ENCODE measurements at regions of chr15 and their contacts with region 1.

Region 1: DNA sequence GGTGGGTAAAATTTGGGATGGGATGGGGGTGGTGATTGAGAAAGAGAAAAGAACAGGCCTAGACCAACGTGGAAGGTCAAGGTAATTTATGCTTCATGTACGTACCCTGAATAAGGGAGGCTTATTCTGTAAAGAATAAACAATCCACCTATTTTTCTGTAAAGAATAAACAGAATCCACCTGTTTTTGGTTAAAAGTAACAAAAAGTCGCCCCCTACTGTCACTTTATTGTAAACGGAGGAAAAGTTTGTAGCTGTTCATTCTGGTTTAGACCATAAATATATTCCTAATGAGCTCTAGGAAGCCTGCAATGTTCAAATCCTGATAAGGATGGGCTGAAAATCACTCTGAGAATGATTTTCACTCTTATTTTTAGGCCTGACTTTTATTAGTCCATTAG is 23.5 kb upstream of the SQOR start:
- DNase-seq: no peak
- ATAC-seq: peak; percentile 43; the same call in 1 of the 3 replicates
- H3K4me3 ChIP-seq: no peak overlapping the region
- H3K27ac ChIP-seq: no peak overlapping the region
- H3K4me1 ChIP-seq: no peaks in the 10 kb centered on the region; the same call in 1 of the 2 replicates
- H3K27me3 ChIP-seq: no peaks in the 10 kb centered on the region
- CTCF ChIP-seq: peak; percentile 42 to 53 (median 46); a peak in 5 of 6 replicates
- EP300 ChIP-seq: no peak
- POLR2A ChIP-seq: no peak
- RAD21 ChIP-seq: peak; percentile 61

Region 2: GRCh38 chr15:45307230-45307924 is 303.9 kb before region 1 on chr15:
- CTCF ChIA-PET with region 1: no interaction called
- POLR2A ChIA-PET with region 1: no interaction called
- RAD21 ChIA-PET with region 1: no interaction called
- SMC1A ChIA-PET with region 1: no interaction called
- in situ Hi-C with region 1: no loop called
- intact Hi-C with region 1: loop called (anchors 1 kb)
- DNase-seq: peak; percentile 31
- ATAC-seq: peak; percentile 71
- H3K4me3 ChIP-seq: peak overlapping the region; percentile 60; the same call in 1 of the 2 replicates
- H3K27ac ChIP-seq: no peak overlapping the region
- H3K4me1 ChIP-seq: no peaks in the 10 kb centered on the region
- H3K27me3 ChIP-seq: no peaks in the 10 kb centered on the region
- CTCF ChIP-seq: peak; percentile 39 to 65 (median 58); a peak in 5 of 6 replicates
- EP300 ChIP-seq: no peak
- POLR2A ChIP-seq: no peak
- RAD21 ChIP-seq: peak; percentile 58

Region 3: DNA sequence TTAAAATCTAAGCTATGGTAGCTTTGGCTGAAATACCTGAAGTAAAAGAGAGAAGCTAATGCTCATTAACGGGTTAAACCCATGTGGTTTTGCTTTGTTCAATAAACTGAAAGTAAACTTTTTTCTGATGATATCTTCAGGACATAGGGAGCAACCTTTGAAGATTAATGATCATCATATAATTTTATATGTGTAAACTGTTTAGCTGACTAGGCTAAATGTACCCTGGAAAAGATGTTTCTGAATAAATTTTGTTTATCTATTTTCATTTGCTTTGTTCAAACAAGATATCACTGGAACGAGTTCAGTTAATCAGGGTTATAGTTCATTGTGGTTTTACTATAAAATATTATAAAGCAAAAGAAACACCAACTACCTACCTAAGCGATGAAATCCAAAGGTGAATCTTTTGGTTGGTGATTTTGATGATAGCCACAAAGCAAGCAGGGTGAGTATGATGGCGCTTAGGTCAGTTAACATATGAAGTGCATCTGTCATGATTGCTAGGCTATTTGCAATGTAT is 100.5 kb before region 1 on chr15:
- CTCF ChIA-PET with region 1: interaction called, 10 read pairs
- POLR2A ChIA-PET with region 1: no interaction called
- RAD21 ChIA-PET with region 1: interaction called, 4 read pairs
- SMC1A ChIA-PET with region 1: interaction called, 5 read pairs
- in situ Hi-C with region 1: no loop called
- intact Hi-C with region 1: no loop called
- DNase-seq: no peak
- ATAC-seq: no peak
- H3K4me3 ChIP-seq: no peak overlapping the region
- H3K27ac ChIP-seq: no peak overlapping the region
- H3K4me1 ChIP-seq: no peaks in the 10 kb centered on the region
- H3K27me3 ChIP-seq: no peaks in the 10 kb centered on the region
- CTCF ChIP-seq: no peak
- EP300 ChIP-seq: no peak
- POLR2A ChIP-seq: no peak
- RAD21 ChIP-seq: no peak

Region 4: DNA sequence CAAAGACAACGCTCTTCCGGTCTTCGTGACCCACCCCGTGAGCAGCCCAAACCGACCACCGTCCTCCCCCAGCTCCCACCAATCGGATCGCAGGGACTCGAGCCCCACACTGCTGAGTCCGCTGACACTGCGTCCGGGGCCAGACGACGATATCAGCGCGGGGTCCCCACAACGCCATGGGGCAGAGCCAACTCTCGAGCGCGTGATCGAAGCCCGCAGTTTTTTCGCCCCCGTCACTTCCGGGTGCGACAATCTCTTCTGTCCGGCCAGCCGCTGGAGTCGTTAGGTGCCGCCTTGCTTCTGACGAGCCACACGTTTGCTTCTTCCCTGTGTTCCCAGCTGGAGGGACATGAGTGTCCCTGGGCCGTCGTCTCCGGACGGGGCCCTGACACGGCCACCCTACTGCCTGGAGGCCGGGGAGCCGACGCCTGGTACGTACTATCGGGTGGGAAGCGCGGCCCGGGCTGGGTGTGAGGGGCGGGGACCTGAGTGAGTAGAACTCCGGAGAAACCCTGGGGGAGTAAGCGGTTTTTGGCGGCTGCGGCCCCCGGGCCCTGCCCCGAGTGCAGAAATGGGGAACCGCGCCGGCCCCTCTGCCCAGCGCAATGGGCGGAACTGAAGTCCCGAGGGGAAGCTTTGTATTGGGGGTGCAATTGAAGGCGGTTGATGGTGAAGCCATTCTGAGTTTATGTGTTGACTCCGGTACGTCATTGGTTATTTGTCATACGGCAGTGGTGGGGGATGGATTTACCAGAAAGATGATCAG is 24.0 kb before region 1 on chr15 and contains the start of gene BLOC1S6:
- CTCF ChIA-PET with region 1: interaction called, 79 read pairs
- POLR2A ChIA-PET with region 1: no interaction called
- RAD21 ChIA-PET with region 1: interaction called, 22 read pairs
- SMC1A ChIA-PET with region 1: interaction called, 18 read pairs
- in situ Hi-C with region 1: no loop called
- intact Hi-C with region 1: no loop called
- DNase-seq: peak; percentile 74
- ATAC-seq: peak; percentile 93
- H3K4me3 ChIP-seq: peak within 1 kb of the TSS; percentile 97
- H3K27ac ChIP-seq: peak within 1 kb of the TSS; percentile 85
- H3K4me1 ChIP-seq: peaks cover 4% of the 10 kb centered on the region; the same call in 1 of the 2 replicates
- H3K27me3 ChIP-seq: no peaks in the 10 kb centered on the region
- CTCF ChIP-seq: no peak
- EP300 ChIP-seq: peak in 1 of 2 experiments; percentile 10; a peak in 1 of 4 replicates
- POLR2A ChIP-seq: peak; percentile 99
- RAD21 ChIP-seq: no peak
- polyA plus RNA-seq, gene BLOC1S6: 13.5 to 16.9 TPM

Region 5: DNA sequence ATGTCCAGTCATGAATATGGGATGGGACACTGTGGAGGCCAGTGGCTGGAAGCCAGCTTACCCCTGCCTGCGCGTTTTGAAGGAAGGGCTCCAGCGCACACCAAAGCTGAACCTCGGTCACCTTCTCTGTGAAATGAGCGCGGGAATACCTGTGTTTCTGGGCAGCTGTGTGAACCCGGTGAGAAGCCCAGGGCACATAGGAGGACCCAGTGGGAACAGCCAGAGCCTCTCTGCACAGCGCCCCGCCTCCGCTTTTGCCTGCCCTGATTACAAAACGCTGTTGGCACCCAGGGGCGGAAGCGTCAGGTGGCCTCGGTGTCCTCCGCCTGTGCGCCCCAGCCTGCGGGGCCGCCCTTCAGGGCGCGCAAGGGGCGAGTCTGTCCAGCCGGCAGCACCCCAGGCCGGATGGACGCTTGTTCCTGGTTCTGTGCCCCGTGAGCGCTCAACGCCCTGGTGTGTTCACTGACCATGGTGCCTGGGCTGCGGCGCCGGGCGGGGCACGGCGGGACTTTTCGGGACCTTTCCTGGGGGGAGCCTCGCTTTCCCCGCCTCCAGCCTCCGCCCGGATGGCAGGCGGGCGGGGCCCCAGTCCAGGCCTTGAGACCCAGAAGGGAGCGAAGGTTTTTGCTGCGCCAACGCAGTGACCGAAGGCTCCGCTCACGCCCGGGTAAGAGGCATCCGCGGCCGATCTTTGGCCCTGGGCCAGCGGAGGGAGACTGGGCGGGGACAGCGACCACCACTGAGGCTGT is 23.3 kb after region 1 on chr15 and contains the start of gene SQOR:
- CTCF ChIA-PET with region 1: interaction called, 10 read pairs
- POLR2A ChIA-PET with region 1: no interaction called
- RAD21 ChIA-PET with region 1: interaction called, 5 read pairs
- SMC1A ChIA-PET with region 1: interaction called, 4 read pairs
- in situ Hi-C with region 1: no loop called
- intact Hi-C with region 1: no loop called
- DNase-seq: peak; percentile 59
- ATAC-seq: peak; percentile 86
- H3K4me3 ChIP-seq: peak within 1 kb of the TSS; percentile 86
- H3K27ac ChIP-seq: peak within 1 kb of the TSS; percentile 74
- H3K4me1 ChIP-seq: peaks cover 30% of the 10 kb centered on the region
- H3K27me3 ChIP-seq: no peaks in the 10 kb centered on the region
- CTCF ChIP-seq: no peak
- EP300 ChIP-seq: 0 out of 4 replicates have a peak, but pooled peaks of 1 of the 2 experiments have one; percentile 8
- POLR2A ChIP-seq: peak; percentile 88
- RAD21 ChIP-seq: no peak
- polyA plus RNA-seq, gene SQOR: 14.5 to 25.6 TPM

Region 6: DNA sequence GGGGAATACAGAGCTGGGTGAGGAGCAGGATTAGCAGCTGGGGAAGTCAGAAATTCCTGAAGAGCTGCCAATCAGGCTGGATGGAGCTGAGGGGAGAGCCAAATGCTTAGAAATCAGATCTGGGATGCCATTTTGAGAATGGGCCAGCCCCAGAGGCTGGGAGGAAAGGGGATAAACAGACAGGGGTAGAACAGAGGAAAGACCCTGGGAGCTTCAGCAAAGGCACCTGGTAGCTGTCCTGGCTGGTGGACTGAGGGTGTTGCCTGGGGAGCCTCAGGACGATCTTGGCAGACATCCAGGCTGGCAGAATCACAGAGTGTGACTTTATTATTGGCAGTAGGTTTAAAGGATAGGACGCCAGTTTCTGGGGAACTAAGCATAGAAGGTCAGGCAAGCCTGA is 121.4 kb after region 1 on chr15:
- CTCF ChIA-PET with region 1: no interaction called
- POLR2A ChIA-PET with region 1: no interaction called
- RAD21 ChIA-PET with region 1: no interaction called
- SMC1A ChIA-PET with region 1: no interaction called
- in situ Hi-C with region 1: no loop called
- intact Hi-C with region 1: no loop called
- DNase-seq: no peak
- ATAC-seq: no peak
- H3K4me3 ChIP-seq: no peak overlapping the region
- H3K27ac ChIP-seq: no peak overlapping the region
- H3K4me1 ChIP-seq: no peaks in the 10 kb centered on the region
- H3K27me3 ChIP-seq: peaks cover 0 to 1% of the 10 kb centered on the region in 2 experiments; a peak in 1 of 4 replicates
- CTCF ChIP-seq: no peak
- EP300 ChIP-seq: no peak
- POLR2A ChIP-seq: no peak
- RAD21 ChIP-seq: no peak

Measured in GM12878 (cell line).